ENCODE measurements at regions of chr13 and their contacts with region 1.

Region 1: GRCh38 chr13:110412132-110412914 is 105.2 kb downstream of the COL4A2 start:
- DNase-seq: peak; percentile 99
- H3K4me3 ChIP-seq: no peak overlapping the region
- CTCF ChIP-seq: peak; percentile 87

Region 2: GRCh38 chr13:110306960-110307746 is 105.2 kb before region 1 on chr13 and contains the starts of genes COL4A1 and COL4A2:
- CTCF ChIA-PET with region 1: interaction called, 11 read pairs
- POLR2A ChIA-PET with region 1: interaction called, 7 read pairs
- DNase-seq: no peak
- H3K4me3 ChIP-seq: peak within 1 kb of the TSS; percentile 78
- CTCF ChIP-seq: no peak

Region 3: GRCh38 chr13:110379905-110380341 is 32.4 kb before region 1 on chr13:
- CTCF ChIA-PET with region 1: interaction called, 11 read pairs
- POLR2A ChIA-PET with region 1: no interaction called
- DNase-seq: no peak
- H3K4me3 ChIP-seq: no peak overlapping the region
- CTCF ChIP-seq: no peak